ENCODE measurements at regions of chr12 and their contacts with region 1.

Region 1: GRCh38 chr12:69738351-69739286 is at the start of gene RAB3IP:
- DNase-seq: peak; percentile 61
- ATAC-seq: peak; percentile 95
- H3K4me3 ChIP-seq: peak within 1 kb of the TSS; percentile 74
- H3K27ac ChIP-seq: no peak within 1 kb of the TSS; the same call in 1 of the 2 replicates
- H3K4me1 ChIP-seq: no peaks in the 10 kb centered on the region
- H3K27me3 ChIP-seq: peaks cover 17% of the 10 kb centered on the region
- CTCF ChIP-seq: peak; percentile 57
- POLR2A ChIP-seq: no peak
- RAD21 ChIP-seq: peak; percentile 11; the same call in 1 of the 2 replicates
- total RNA-seq, gene RAB3IP: 2.7 and 3.3 TPM in 2 replicates

Region 2: DNA sequence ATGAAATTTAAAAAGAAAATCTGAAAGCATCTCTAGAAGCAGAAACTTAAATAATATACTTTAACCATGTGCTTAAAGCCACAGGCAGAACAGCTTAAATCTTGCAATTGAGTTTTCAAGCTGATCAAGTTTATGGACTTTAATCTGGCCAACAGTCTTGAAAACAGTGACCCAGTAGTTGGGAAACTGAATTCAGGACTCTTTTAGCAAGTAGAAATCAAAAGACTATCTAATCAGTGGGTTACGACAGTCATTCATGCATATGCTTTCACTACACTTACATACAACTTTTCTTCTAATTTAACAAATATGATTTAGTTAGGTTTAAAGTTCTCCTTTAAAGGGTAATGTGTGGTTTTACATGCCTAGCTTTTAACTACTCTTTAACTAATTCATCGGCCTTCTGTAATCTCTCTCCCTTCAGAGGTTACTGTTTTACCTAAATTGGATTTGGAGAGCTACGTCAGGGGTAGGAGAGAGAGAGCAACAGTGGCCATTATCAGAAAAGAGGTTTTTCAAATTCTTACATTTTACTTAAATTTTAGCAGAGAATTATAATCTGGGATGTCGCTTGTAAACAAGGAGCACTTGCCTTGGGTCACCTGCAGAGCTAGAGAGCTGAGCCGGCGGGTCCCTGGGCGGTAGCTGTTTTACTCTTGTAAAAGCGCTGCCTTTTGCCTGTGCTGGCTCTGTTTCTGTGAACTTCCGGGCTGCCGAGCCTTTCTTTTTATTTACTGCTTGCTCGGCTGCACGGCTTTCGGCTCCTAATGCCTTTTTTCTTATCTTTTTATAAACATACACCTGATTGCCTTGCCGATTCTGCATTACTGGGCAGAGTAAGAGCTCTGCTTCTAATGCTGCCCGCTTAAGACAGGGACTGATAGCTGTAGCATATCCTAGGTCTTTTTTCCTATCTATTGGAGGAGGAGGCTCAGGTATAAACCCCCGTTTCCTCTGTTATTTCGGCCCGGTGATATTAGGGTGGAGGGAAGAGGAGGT is 407.8 kb before region 1 on chr12:
- CTCF ChIA-PET with region 1: no interaction called
- POLR2A ChIA-PET with region 1: no interaction called
- dilution Hi-C with region 1: no loop called
- in situ Hi-C with region 1: loop called (anchors 25 kb)
- intact Hi-C with region 1: no loop called
- DNase-seq: peak; percentile 1
- ATAC-seq: peak; percentile 67
- H3K4me3 ChIP-seq: peak overlapping the region; percentile 4
- H3K27ac ChIP-seq: no peak overlapping the region
- H3K4me1 ChIP-seq: 0 out of 2 replicates have a peak, but pooled peaks cover 2% of the 10 kb centered on the region
- H3K27me3 ChIP-seq: peaks cover 32% of the 10 kb centered on the region
- CTCF ChIP-seq: no peak
- POLR2A ChIP-seq: no peak
- RAD21 ChIP-seq: no peak

Region 3: DNA sequence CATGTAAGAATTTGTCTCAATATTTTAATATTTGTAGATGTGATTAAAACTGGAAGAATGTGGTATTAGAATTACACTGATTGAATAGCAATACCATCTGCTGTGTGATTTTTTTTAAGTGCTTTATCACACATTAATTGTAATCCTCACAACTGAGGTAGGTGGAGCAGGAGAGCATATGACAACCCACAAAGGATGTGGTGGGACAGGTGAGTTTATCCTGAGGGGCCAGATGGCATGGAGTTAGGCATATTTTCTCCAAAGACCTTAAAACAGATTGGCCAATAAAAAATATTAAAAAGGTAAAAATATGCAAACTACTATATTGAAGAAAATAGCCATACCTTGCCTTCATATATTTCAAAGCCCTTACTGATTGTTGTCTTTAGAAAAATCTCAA is 135.7 kb before region 1 on chr12:
- CTCF ChIA-PET with region 1: no interaction called
- POLR2A ChIA-PET with region 1: no interaction called
- dilution Hi-C with region 1: no loop called
- in situ Hi-C with region 1: no loop called
- intact Hi-C with region 1: loop called (anchors 10 kb)
- DNase-seq: no peak
- ATAC-seq: no peak
- H3K4me3 ChIP-seq: no peak overlapping the region
- H3K27ac ChIP-seq: no peak overlapping the region
- H3K4me1 ChIP-seq: no peaks in the 10 kb centered on the region
- H3K27me3 ChIP-seq: no peaks in the 10 kb centered on the region
- CTCF ChIP-seq: no peak
- POLR2A ChIP-seq: no peak
- RAD21 ChIP-seq: no peak

Region 4: DNA sequence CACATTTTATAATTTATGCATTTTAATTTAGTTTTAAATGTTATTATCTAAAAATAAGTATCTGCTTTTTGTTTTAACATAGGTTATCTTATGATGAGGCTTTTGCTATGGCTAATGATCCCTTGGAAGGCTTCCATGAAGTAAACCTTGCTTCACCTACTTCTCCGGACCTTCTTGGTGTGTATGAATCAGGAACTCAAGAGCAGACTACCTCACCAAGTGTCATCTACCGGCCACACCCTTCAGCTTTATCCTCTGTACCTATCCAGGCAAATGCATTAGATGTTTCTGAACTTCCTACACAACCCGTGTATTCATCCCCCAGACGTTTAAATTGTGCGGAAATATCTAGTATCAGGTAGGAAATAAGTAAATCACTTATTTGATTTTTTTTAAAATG is 16.7 kb after region 1 on chr12:
- CTCF ChIA-PET with region 1: no interaction called
- POLR2A ChIA-PET with region 1: no interaction called
- dilution Hi-C with region 1: no loop called
- in situ Hi-C with region 1: no loop called
- intact Hi-C with region 1: no loop called
- DNase-seq: no peak
- ATAC-seq: no peak
- H3K4me3 ChIP-seq: no peak overlapping the region
- H3K27ac ChIP-seq: no peak overlapping the region
- H3K4me1 ChIP-seq: no peaks in the 10 kb centered on the region
- H3K27me3 ChIP-seq: no peaks in the 10 kb centered on the region
- CTCF ChIP-seq: no peak
- POLR2A ChIP-seq: no peak
- RAD21 ChIP-seq: no peak

Measured in IMR-90 (cell line).